ACHN (cell line): ENCODE measurements at regions of chr7 and their contacts with region 1.

Region 1: GRCh38 chr7:100705753-100706671 is at the start of gene POP7:
- DNase-seq: peak; percentile 100

Region 2: DNA sequence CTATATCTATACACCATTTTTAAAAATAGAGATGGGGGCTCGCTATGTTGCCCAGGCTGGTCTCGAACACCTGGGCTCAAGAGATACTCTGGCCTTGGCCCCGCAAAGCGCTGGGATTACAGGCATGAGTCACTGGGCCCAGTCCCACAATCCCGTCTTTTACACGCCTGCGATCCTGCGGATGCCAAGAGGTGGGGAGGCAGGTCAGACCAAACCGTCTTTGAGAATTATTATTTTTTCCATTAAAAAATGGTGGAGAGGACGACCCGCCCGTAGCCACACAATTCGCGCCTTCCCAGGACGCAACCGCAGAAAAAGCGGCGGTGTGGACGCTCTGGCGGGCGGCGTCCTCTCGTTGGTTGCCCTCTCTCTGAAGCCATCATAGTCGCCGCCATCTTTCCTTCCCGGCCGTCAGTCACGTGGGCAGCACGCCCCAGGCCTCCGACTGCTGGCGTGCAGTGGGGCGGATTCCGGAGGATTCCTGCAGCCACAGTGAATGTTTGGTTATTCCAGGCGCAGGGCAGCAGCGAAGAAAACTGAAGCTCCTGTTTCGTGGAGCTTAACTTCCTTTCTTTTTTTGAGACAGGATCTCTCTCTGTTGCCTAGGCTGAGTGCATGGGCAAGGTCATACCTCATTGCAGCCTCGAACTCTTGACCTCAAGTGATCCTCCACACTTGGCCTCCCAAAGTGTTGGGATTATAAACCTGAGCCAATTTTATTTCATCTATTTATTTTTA is 131.3 kb after region 1 on chr7:
- in situ Hi-C with region 1: loop called (anchors 25 kb)
- DNase-seq: peak; percentile 92